ENCODE measurements at regions of chr6 and their contacts with region 1.

Region 1: DNA sequence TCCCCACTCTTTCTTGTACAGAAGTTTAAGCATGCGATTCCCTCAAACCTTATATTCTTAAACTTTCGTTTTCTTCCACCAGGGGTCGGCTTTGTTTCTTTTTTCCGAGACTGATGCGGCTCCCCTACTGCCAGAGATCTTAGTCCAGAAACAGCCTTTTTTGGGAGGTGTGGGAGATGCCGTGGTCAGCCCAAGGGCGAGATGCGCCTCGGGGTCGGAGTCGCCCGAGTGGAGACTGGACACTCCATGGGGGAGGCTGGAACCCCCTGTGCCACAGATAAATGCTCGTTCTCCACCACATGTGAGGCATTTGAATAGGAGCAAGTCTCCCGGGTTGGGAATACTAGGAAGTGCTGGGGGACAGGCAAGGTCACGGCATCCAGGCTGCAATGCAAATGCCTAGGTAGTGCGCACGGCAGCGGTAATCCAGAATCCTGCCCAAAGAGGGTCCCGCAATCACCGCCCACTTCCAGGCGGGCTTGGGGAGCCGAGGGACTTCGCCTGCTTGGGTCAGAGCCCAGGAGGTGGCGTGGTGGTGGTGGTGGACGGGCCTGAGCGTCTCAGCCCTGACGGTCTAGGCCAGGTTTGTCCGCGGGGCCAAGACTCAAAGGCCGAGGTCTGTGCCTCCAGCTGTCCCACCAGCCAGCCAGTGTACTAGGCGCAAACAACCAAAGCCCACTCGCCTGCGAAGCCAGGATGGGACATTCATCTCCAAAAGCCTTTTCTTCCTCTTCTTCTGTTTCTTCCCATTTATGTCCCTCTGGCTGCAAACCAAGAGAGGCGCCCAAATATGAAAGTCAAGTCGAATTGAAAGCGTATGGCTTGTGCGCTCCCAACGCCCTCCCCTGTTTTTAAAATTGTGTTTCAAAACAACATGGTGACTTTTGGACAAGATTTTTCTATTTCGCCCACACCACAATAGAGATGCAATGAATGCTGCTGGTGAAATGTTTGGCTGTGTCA is 39.3 kb upstream of the OSTM1 start:
- DNase-seq: no peak
- ATAC-seq: peak; percentile 11
- H3K4me3 ChIP-seq: peak overlapping the region; percentile 19
- H3K27ac ChIP-seq: no peak overlapping the region
- H3K4me1 ChIP-seq: peaks cover 36% of the 10 kb centered on the region
- H3K27me3 ChIP-seq: peaks cover 69% of the 10 kb centered on the region
- CTCF ChIP-seq: peak; percentile 46

Region 2: GRCh38 chr6:107784669-107785068 is 329.2 kb before region 1 on chr6:
- intact Hi-C with region 1: no loop called
- DNase-seq: no peak
- ATAC-seq: no peak
- H3K4me3 ChIP-seq: no peak overlapping the region
- H3K27ac ChIP-seq: no peak overlapping the region
- H3K4me1 ChIP-seq: peaks cover 7% of the 10 kb centered on the region
- H3K27me3 ChIP-seq: no peaks in the 10 kb centered on the region
- CTCF ChIP-seq: no peak

Region 3: GRCh38 chr6:107894821-107895396 is 218.9 kb before region 1 on chr6:
- intact Hi-C with region 1: no loop called
- DNase-seq: no peak
- ATAC-seq: peak; percentile 58
- H3K4me3 ChIP-seq: no peak overlapping the region
- H3K27ac ChIP-seq: no peak overlapping the region
- H3K4me1 ChIP-seq: peaks cover 5% of the 10 kb centered on the region
- H3K27me3 ChIP-seq: no peaks in the 10 kb centered on the region
- CTCF ChIP-seq: no peak

Region 4: DNA sequence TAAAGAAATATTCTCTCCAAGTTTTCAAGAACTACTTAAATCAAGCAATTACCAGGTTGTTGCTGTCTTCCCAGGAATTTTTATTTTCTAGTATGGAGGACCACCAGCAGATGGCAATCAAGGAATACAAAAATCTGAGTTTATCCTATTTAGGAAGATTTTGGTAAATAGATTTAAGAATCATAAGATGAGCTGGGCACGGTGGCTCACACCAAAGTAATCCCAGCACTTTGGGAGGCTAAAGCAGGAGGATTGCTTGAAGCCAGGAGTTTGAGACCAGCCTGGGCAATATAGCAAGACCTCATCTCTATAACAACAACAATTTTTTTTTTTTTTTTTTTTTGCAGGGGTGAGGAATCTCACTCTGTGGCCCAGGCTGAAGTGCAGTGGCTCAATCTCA is 136.6 kb before region 1 on chr6:
- intact Hi-C with region 1: no loop called
- DNase-seq: no peak
- ATAC-seq: no peak
- H3K4me3 ChIP-seq: no peak overlapping the region
- H3K27ac ChIP-seq: no peak overlapping the region
- H3K4me1 ChIP-seq: no peaks in the 10 kb centered on the region
- H3K27me3 ChIP-seq: no peaks in the 10 kb centered on the region
- CTCF ChIP-seq: peak; percentile 30

Region 5: DNA sequence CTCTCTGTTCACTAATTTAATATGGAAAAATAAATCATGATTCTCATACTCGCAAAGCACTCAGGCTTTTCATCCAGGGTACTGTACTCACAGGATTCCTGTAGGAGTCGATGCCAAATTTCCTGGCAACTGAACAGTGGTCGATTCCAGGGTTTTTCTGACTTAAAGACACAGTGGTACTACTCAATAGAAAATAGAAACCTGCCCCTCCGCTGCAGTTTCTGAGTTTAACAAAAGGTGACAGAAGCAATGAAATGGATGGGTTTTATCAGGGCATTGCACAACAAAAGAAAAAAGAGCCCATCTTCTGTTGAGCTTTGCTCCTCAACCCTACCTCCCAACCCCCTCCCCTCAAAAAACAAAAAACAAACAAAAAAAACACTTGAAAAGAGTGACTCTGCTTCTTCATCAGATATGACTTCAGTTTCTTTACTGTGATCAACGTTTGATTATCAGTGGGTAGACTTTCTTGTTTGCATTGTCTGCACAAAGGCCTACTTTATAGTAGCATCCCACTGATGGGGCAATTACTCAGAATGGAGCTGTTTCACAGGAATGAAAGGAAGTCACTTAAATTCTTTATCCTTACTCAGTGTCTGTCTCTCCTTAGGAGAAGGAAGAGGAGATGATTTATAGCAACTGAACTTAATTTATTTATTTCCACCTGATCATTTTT is 350.7 kb after region 1 on chr6:
- intact Hi-C with region 1: no loop called
- DNase-seq: no peak
- ATAC-seq: no peak
- H3K4me3 ChIP-seq: no peak overlapping the region
- H3K27ac ChIP-seq: no peak overlapping the region
- H3K4me1 ChIP-seq: no peaks in the 10 kb centered on the region
- H3K27me3 ChIP-seq: no peaks in the 10 kb centered on the region
- CTCF ChIP-seq: no peak

Region 6: DNA sequence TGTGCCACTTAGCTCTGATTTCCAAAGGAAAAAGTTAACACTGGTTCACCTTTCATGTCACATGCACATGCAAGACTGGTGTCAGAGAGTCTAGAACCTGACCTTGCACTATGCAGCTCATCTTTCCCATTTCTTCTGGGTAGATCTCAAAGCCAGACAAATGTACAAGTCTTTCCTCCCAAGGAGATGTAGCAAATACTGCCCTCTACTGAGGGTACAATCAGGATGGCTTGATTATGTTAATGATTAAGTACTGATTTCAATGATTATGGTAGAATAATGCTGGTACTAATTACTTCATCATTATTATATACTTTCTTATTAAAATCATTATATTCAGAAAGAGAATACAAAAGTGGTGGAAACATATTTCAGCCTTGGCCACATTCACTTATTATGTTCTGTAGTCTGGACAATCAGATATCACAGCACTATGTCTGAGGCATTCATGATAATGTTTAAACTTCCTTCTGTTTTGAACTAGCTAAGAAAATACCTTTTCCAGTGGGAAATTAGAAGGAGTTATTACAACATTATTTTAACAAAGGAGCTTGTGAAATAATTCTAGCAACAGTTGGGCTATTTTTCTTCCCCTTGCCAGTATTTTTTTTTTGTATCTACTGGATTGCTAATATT is 378.4 kb after region 1 on chr6:
- intact Hi-C with region 1: loop called (anchors 10 kb)
- DNase-seq: no peak
- ATAC-seq: peak; percentile 80
- H3K4me3 ChIP-seq: no peak overlapping the region
- H3K27ac ChIP-seq: no peak overlapping the region
- H3K4me1 ChIP-seq: no peaks in the 10 kb centered on the region
- H3K27me3 ChIP-seq: no peaks in the 10 kb centered on the region
- CTCF ChIP-seq: peak; percentile 67

Region 7: GRCh38 chr6:108526739-108527174 is 412.9 kb after region 1 on chr6:
- intact Hi-C with region 1: loop called (anchors 10 kb)
- DNase-seq: no peak
- ATAC-seq: peak; percentile 78
- H3K4me3 ChIP-seq: no peak overlapping the region
- H3K27ac ChIP-seq: no peak overlapping the region
- H3K4me1 ChIP-seq: no peaks in the 10 kb centered on the region
- H3K27me3 ChIP-seq: no peaks in the 10 kb centered on the region
- CTCF ChIP-seq: peak; percentile 82